ENCODE measurements at regions of chr17 and their contacts with region 1.

Region 1: GRCh38 chr17:5344914-5345313 is 62.8 kb downstream of the RABEP1 start:
- DNase-seq: no peak
- ATAC-seq: no peak
- H3K4me3 ChIP-seq: no peak overlapping the region
- H3K27ac ChIP-seq: no peak overlapping the region
- H3K4me1 ChIP-seq: no peaks in the 10 kb centered on the region
- H3K27me3 ChIP-seq: no peaks in the 10 kb centered on the region
- CTCF ChIP-seq: no peak

Region 2: DNA sequence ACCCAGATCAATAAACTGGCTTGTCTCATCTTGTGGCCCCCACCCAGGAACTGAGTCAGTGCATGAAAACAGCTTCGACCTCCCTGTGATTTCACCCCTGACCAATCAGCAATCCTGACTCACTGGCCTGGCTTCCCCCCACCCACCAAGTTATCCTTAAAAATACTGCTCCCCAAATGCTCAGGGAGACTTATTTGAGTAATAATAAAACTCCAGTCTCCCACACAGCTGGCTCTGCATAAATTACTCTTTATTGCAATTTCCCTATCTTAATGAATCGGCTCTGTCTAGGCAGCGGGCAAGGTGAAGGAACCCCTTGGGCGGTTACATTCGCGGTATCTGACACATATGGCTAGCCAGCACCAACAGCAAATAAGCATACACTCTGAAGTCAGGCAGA is 72.6 kb before region 1 on chr17:
- CTCF ChIA-PET with region 1: no interaction called
- POLR2A ChIA-PET with region 1: interaction called, 11 read pairs
- in situ Hi-C with region 1: no loop called
- intact Hi-C with region 1: no loop called
- DNase-seq: no peak
- ATAC-seq: no peak
- H3K4me3 ChIP-seq: no peak overlapping the region
- H3K27ac ChIP-seq: no peak overlapping the region
- H3K4me1 ChIP-seq: no peaks in the 10 kb centered on the region
- H3K27me3 ChIP-seq: no peaks in the 10 kb centered on the region
- CTCF ChIP-seq: no peak